Calu3 (cell line): ENCODE measurements at regions of chr13 and their contacts with region 1.

Region 1: GRCh38 chr13:38862443-38862842 is 128.2 kb downstream of the STOML3 start:
- DNase-seq: no peak
- H3K4me3 Mint-ChIP-seq: no peak overlapping the region
- H3K27ac Mint-ChIP-seq: no peak overlapping the region
- H3K4me1 Mint-ChIP-seq: no peaks in the 10 kb centered on the region
- H3K27me3 Mint-ChIP-seq: no peaks in the 10 kb centered on the region
- CTCF ChIP-seq: no peak

Region 2: GRCh38 chr13:38883783-38884182 is 21.3 kb after region 1 on chr13:
- CTCF ChIA-PET with region 1: no interaction called
- intact Hi-C with region 1: loop called (anchors 2 kb)
- DNase-seq: no peak
- H3K4me3 Mint-ChIP-seq: no peak overlapping the region
- H3K27ac Mint-ChIP-seq: no peak overlapping the region
- H3K4me1 Mint-ChIP-seq: peaks cover 17% of the 10 kb centered on the region
- H3K27me3 Mint-ChIP-seq: no peaks in the 10 kb centered on the region
- CTCF ChIP-seq: no peak